ENCODE measurements at regions of chr1 and their contacts with region 1.

Region 1: GRCh38 chr1:61049850-61050540 is 32.4 kb upstream of the NFIA start:
- DNase-seq: peak; percentile 80 to 82 (median 82)
- H3K4me3 ChIP-seq: peak overlapping the region; percentile 69 to 95 (median 73)
- H3K4me3 Mint-ChIP-seq: peak overlapping the region; percentile 81 to 84
- H3K27ac ChIP-seq: no peak overlapping the region
- H3K27ac Mint-ChIP-seq: no peak overlapping the region
- H3K4me1 ChIP-seq: peaks cover 23 to 46% of the 10 kb centered on the region in 2 donors
- H3K4me1 Mint-ChIP-seq: peaks cover 40% of the 10 kb centered on the region
- H3K27me3 ChIP-seq: peaks cover 37 to 43% of the 10 kb centered on the region in 2 donors
- H3K27me3 Mint-ChIP-seq: peaks cover 38 to 46% (median 40%) of the 10 kb centered on the region in 3 donors
- CTCF ChIP-seq: peak; percentile 93

Region 2: DNA sequence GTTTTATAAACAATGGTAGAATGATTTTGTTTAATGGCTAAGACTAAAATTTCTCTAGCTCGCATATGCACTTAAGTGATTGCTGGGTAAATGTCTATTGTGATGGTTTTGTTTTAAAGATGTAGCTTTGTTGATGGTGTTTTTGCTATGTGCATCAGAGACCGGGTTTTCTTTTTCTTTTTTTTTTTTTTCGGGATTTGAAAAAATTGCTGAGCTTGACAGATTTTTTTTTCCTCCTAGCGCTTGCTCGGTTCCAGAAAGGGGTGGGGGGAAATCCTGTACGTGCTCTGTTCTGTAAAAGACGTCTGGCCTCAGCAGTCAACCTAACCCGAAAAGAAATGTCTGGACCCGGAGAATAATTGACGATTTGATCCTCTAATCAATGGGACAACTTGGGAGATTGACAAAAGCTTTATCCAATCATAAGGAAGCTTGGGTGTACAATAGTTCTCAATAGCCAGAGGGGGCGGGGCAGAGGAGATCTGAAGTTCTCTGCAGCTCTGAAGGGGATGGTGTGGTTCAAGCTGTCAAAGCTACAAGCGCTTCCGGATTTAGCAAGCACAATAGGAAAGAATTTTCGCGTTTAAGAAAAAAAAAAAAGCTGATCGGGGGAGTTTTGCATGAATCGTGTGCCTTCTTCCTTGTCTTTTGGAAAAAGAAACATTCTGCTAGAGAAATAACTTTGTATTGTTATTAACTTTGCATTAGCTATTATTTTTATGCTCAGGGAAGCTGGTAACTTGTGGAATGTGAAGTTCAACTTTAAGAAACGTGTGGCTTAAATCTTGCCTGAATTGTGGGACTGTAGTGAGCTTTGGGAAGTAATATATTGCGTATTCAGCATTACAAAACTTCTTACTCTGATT is 27.9 kb after region 1 on chr1:
- intact Hi-C with region 1: loop called in 1 of 2 experiments (anchors 5 kb)
- DNase-seq: peak; percentile 87 to 95 (median 93)
- H3K4me3 ChIP-seq: peak overlapping the region; percentile 62 to 97 (median 94)
- H3K4me3 Mint-ChIP-seq: peak overlapping the region; percentile 94 to 97
- H3K27ac ChIP-seq: peak overlapping the region; percentile 21 to 91
- H3K27ac Mint-ChIP-seq: peak overlapping the region; percentile 88 to 97 (median 95)
- H3K4me1 ChIP-seq: peaks cover 41 to 48% of the 10 kb centered on the region in 2 donors
- H3K4me1 Mint-ChIP-seq: peaks cover 48% of the 10 kb centered on the region
- H3K27me3 ChIP-seq: peaks cover 0 to 5% of the 10 kb centered on the region in 2 donors
- H3K27me3 Mint-ChIP-seq: peaks cover 5 to 7% (median 7%) of the 10 kb centered on the region in 3 donors
- CTCF ChIP-seq: no peak

Region 3: DNA sequence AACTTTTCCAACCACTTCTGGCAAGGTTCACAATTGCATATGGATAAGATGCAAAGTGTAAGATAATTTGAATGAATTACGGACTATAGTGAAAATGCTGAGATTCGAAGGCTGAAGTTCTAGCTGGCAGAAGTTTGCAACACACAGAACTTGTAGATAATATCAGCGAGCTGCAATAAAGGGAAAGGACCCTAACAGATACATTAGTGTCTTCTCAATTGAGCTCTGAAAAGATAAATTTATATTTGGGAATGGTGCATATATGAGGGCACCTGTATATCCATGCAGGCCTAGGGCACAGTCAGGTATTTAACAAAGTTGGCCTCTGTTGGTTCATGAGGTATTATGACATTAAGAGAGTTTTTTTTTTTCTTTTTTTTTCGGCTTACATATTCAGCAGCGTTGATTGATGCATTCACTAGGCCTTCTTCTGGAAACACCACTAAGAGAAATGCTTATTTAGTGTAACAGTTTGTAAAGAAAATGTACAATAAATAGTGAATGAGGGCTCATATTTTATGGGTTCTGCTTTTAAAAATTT is 34.6 kb after region 1 on chr1:
- intact Hi-C with region 1: loop called (anchors 5 kb)
- DNase-seq: no peak
- H3K4me3 ChIP-seq: peak overlapping the region in 1 of 3 experiments; percentile 89
- H3K4me3 Mint-ChIP-seq: peak overlapping the region in 1 of 2 donors; percentile 93
- H3K27ac ChIP-seq: no peak overlapping the region
- H3K27ac Mint-ChIP-seq: no peak overlapping the region
- H3K4me1 ChIP-seq: peaks cover 27 to 33% of the 10 kb centered on the region in 2 donors
- H3K4me1 Mint-ChIP-seq: peaks cover 42% of the 10 kb centered on the region
- H3K27me3 ChIP-seq: peaks cover 0 to 15% of the 10 kb centered on the region in 2 donors
- H3K27me3 Mint-ChIP-seq: peaks cover 7 to 18% (median 10%) of the 10 kb centered on the region in 3 donors
- CTCF ChIP-seq: no peak

Region 4: DNA sequence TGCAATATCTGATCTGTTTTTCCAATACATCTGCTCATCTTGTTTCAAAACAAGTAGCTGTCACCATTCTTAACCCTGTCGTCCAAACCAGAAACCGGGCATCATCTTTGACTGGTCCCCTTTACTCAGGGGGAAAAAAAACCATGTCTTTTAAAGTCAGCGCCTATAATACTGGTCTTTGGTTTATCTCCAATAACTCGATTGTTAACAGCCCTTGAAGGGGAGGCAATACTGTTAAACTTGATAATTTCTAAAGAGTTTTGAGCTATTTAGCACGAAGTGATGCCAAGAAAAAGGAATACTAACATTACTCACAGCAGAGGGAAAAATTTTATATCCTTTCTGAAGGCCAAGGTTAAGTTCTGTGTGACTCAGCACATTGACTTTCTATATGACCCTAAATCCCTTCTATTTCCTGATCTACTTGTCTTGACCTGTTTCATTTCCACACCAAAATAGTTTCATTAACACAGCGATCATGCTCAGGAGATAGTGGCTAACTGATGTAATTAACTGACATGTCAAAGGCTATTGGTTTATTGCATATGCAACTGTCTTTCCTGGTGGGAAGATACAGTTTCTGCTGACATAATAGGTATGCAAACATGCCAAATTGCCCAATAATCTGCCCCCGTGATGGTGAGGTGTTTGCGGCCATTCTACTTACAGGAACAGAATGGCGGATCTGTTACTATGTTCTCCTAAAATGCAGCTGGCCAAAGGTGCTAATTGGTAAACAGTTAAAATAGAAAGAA is 91.5 kb after region 1 on chr1:
- intact Hi-C with region 1: no loop called
- DNase-seq: peak in 2 of 3 donors; percentile 18 to 55
- H3K4me3 ChIP-seq: no peak overlapping the region
- H3K4me3 Mint-ChIP-seq: no peak overlapping the region
- H3K27ac ChIP-seq: no peak overlapping the region
- H3K27ac Mint-ChIP-seq: no peak overlapping the region
- H3K4me1 ChIP-seq: peaks cover 22 to 31% of the 10 kb centered on the region in 2 donors
- H3K4me1 Mint-ChIP-seq: peaks cover 29% of the 10 kb centered on the region
- H3K27me3 ChIP-seq: no peaks in the 10 kb centered on the region
- H3K27me3 Mint-ChIP-seq: peaks cover 0 to 1% (median 0%) of the 10 kb centered on the region in 3 donors
- CTCF ChIP-seq: no peak

Measured in CD14-positive monocyte (primary cell).